A549 (cell line): ENCODE measurements at regions of chr17 and their contacts with region 1.

Region 1: DNA sequence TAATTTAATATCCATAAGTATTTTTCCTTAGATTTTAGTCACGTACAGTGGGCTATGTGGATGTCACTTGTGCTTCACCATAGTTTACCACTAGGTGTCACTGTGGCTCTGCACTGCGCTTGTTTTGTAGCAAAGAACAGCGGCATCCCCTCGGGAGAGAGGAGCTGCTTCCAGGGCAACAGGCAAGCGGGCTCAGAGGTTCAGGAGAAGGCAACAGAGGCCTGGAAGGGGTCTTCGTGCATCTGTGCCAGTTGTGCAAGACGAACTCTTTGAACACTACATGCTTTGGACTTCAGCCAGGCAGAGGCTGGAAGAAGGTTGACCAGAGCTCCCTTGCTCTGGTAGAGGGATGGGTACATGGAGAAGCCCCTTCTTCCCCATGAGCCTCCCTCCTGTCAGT is 20.6 kb downstream of the CYB561 start:
- DNase-seq: peak; percentile 83 to 86
- ATAC-seq: peak; percentile 63 to 93
- H3K4me3 ChIP-seq: no peak overlapping the region
- H3K27ac ChIP-seq: no peak overlapping the region
- H3K4me1 ChIP-seq: no peaks in the 10 kb centered on the region
- CTCF ChIP-seq: peak; percentile 99
- EP300 ChIP-seq: no peak
- POLR2A ChIP-seq: no peak
- RAD21 ChIP-seq: peak; percentile 97 to 99

Region 2: GRCh38 chr17:63412234-63412633 is 13.2 kb before region 1 on chr17:
- CTCF ChIA-PET with region 1: interaction called, 90 read pairs
- POLR2A ChIA-PET with region 1: interaction called, 3 read pairs
- DNase-seq: no peak
- ATAC-seq: peak; percentile 24 to 38; a peak in 2 of 6 replicates
- H3K4me3 ChIP-seq: no peak overlapping the region
- H3K27ac ChIP-seq: no peak overlapping the region
- H3K4me1 ChIP-seq: no peaks in the 10 kb centered on the region
- CTCF ChIP-seq: no peak
- EP300 ChIP-seq: no peak
- POLR2A ChIP-seq: no peak
- RAD21 ChIP-seq: no peak

Region 3: DNA sequence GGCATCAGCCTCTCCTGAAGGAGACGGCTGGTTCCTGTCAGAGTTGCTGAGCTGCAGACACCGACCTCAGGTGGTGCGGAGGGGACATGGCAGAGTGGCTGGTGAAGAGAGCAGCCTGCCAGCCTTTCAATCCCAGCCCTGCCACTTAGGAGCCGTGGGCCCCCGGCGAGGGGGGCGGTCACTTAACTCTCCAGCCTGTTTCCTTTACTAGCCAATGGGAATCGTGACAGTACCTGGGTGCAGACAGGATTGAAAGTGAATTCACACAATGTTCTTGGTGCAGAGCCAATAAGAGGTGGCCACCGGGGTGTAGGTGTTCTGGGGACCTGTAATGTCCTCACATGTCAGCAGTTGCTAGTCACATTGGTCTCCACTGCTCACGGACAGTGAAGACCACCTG is 64.8 kb after region 1 on chr17:
- CTCF ChIA-PET with region 1: interaction called, 20 read pairs
- POLR2A ChIA-PET with region 1: no interaction called
- DNase-seq: no peak
- ATAC-seq: peak in 1 of 2 experiments; percentile 15; a peak in 2 of 6 replicates
- H3K4me3 ChIP-seq: no peak overlapping the region
- H3K27ac ChIP-seq: no peak overlapping the region; a peak in 1 of 6 replicates
- H3K4me1 ChIP-seq: no peaks in the 10 kb centered on the region
- CTCF ChIP-seq: no peak
- EP300 ChIP-seq: no peak
- POLR2A ChIP-seq: no peak
- RAD21 ChIP-seq: no peak

Region 4: DNA sequence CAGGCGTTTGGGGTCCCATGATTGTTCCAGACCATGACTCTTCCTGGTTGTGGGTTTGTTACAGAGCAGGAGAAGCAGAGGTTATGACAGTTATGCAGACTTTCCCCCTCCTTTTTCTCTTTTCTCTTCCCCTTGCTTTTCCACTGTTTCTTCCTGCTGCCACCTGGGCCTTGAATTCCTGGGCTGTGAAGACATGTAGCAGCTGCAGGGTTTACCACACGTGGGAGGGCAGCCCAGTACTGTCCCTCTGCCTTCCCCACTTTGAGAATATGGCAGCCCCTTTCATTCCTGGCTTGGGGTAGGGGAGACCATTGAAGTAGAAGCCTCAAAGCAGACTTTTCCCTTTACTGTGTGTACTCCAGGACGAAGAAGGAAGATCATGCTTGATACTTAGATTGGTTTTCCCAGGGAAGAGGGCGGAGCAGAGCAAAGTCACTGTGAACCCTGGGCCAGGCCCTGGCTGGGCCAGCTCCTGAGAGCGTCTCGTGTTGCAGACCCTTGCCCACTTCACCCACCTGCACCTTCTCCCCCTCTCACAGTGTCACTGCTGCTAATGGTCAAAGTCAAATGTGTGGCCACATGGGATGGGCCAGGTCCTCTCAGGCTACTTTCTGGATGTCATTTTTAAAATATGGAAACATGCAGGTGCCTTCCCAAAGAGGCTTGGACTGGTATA is 167.5 kb after region 1 on chr17:
- CTCF ChIA-PET with region 1: interaction called, 10 read pairs
- POLR2A ChIA-PET with region 1: no interaction called
- DNase-seq: no peak
- ATAC-seq: no peak; a peak in 1 of 6 replicates
- H3K4me3 ChIP-seq: no peak overlapping the region
- H3K27ac ChIP-seq: no peak overlapping the region
- H3K4me1 ChIP-seq: no peaks in the 10 kb centered on the region
- CTCF ChIP-seq: no peak
- EP300 ChIP-seq: no peak
- POLR2A ChIP-seq: no peak
- RAD21 ChIP-seq: no peak

Region 5: GRCh38 chr17:63675607-63676413 is 250.3 kb after region 1 on chr17:
- CTCF ChIA-PET with region 1: interaction called, 10 read pairs
- POLR2A ChIA-PET with region 1: no interaction called
- DNase-seq: peak in 1 of 2 experiments; percentile 40
- ATAC-seq: peak; percentile 47 to 67; a peak in 4 of 6 replicates
- H3K4me3 ChIP-seq: no peak overlapping the region
- H3K27ac ChIP-seq: no peak overlapping the region
- H3K4me1 ChIP-seq: peaks cover 9% of the 10 kb centered on the region; the same call in 2 of the 3 replicates
- CTCF ChIP-seq: no peak
- EP300 ChIP-seq: no peak
- POLR2A ChIP-seq: no peak
- RAD21 ChIP-seq: no peak